Activated T-helper 1 cell treated with anti-CD3 and anti-CD28 coated beads, Interleukin-12 subunit alpha, Interleukin-12 subunit beta, Interleukin-2, Interleukin-4 antibody, amounts not matched to agents 30 ng/mL and 10 ng/mL and 1 ng/mL, durations not matched to agents 14 hours and 24 hours and 36 hours (primary cell): ENCODE measurements at regions of chr2 and their contacts with region 1.

Region 1: DNA sequence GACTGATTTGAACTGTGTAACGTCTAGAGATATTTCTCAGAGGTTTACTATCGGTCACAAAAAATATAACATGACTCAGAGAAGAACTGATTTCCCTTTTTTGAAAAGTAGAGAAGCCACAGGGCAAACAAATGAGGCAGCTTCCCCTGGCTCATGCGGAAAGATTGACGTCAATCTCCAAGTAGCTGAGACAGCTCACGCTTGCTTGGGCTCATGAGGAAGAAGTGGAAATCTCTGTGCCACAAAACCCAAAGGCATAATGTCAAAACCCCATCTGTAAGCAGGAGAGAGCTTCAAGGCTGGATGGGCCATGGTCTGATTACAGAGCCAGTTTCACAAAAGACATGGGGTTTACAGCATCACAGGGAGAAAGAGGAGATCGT is 188.1 kb downstream of the ARL4C start:
- DNase-seq: peak; percentile 79
- H3K4me3 Mint-ChIP-seq: peak overlapping the region; percentile 68
- H3K27ac Mint-ChIP-seq: peak overlapping the region; percentile 99
- H3K4me1 Mint-ChIP-seq: peaks cover 70% of the 10 kb centered on the region
- H3K27me3 Mint-ChIP-seq: no peaks in the 10 kb centered on the region

Region 2: DNA sequence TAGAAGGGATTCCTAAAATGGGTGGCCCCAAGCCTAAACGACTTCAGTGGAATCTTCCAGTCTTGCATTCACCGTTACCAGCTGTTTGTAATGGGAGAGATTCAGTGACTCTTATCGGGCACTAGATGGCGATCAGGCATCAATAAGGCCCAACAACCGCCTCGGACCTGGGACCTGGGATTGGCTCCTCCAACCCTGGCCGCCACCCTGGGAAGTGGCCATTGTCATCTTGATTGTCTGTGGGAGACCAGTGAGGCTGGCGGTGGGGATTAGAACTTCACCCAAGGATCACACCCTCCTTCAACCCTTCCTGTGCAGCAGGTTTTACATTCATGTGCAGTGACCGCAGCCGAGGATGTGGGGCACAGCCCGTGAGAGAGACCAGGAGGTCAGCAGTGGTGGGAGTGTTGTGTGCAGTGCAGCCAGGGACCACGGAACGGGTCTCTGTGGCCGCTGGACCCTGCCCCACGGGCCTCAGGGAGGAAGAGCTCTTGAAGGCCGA is 173.0 kb before region 1 on chr2:
- intact Hi-C with region 1: loop called (anchors 1 kb)
- DNase-seq: peak; percentile 43
- H3K4me3 Mint-ChIP-seq: no peak overlapping the region
- H3K27ac Mint-ChIP-seq: no peak overlapping the region
- H3K4me1 Mint-ChIP-seq: peaks cover 19% of the 10 kb centered on the region
- H3K27me3 Mint-ChIP-seq: peaks cover 10% of the 10 kb centered on the region

Region 3: DNA sequence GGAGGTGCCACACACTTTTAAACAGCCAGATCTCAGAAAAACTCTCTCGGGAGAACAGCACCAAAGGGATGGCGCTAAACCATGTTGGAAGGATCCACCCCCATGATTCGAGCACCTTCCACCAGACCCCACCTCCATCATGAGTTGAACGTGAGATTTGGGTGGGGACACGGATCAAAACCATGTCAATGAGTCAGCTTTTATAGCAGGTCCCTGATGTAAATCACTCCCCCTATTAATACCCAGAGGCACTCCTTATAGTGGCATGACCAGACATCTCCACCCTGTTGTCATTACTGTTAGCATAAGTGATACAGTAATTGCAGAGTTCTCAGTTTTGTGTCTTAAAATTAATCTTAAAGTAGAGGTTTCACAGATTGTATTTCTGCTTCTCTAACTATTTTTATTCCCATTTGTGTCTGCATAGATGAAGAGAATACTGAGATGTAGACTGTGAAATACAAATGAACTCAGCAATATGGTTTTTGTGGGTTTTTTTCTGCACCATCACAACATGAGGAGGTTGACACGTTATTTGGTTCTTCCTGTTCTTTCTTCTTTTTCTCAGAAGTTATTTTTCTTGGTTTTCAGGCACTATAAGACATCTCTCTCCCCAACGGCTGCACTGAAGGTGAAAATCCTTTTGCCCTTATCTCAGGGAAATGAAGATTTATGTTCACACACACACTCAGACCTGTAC is 30.1 kb before region 1 on chr2:
- intact Hi-C with region 1: loop called (anchors 1 kb)
- DNase-seq: peak; percentile 35
- H3K4me3 Mint-ChIP-seq: peak overlapping the region; percentile 44
- H3K27ac Mint-ChIP-seq: peak overlapping the region; percentile 82
- H3K4me1 Mint-ChIP-seq: peaks cover 81% of the 10 kb centered on the region
- H3K27me3 Mint-ChIP-seq: no peaks in the 10 kb centered on the region

Region 4: GRCh38 chr2:234324116-234324515 is 15.3 kb after region 1 on chr2:
- intact Hi-C with region 1: loop called (anchors 2 kb)
- DNase-seq: no peak
- H3K4me3 Mint-ChIP-seq: no peak overlapping the region
- H3K27ac Mint-ChIP-seq: peak overlapping the region; percentile 93
- H3K4me1 Mint-ChIP-seq: peaks cover 52% of the 10 kb centered on the region
- H3K27me3 Mint-ChIP-seq: no peaks in the 10 kb centered on the region

Region 5: DNA sequence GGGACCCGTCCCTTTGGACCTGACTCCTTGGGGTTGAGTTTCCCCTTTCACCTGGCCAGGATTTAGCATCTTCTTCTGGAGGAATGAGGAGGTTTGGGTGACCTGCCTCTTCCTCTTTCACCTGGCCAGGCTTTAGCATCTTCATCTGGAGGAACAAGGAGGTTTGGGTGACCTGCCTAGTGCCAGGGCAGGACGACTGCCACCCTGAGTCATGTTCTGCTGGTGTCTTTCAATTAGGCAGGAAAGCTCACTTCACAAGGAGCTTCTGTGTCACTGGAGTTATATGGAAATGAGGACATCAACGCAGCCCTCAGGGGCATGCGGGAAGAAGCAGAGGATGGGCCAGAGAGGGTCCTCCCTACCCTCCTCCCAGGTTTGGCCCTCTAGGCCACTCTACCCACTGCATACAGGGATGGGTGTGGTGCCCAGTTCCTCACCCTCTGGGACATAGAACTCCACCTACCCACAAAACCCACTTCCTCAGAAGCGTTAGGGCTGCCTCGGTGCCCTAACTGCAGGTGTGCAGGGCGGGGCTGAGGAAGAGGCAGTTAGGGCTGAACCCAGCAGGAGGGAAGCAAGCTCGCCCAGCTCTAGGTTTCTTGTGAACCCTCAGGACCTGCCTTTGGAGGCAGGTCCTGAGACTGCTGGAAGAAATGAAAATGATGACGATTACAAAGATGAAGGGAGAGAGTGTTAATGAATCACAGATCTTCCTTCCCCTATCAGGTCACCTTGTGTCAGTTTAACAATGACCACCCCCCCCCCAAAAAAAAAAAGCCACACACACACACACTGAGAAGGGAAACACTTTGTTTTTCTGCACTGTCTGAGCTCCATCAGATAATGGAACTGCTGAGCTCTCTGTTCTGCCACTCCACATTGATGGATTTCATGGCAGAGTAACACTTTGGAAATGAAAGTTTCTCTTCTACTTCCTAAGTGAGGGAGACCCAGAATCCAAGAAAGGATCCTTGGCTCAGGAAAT is 117.1 kb after region 1 on chr2:
- intact Hi-C with region 1: loop called (anchors 1 kb)
- DNase-seq: peak; percentile 75
- H3K4me3 Mint-ChIP-seq: peak overlapping the region; percentile 75
- H3K27ac Mint-ChIP-seq: peak overlapping the region; percentile 99
- H3K4me1 Mint-ChIP-seq: peaks cover 77% of the 10 kb centered on the region
- H3K27me3 Mint-ChIP-seq: no peaks in the 10 kb centered on the region

Region 6: DNA sequence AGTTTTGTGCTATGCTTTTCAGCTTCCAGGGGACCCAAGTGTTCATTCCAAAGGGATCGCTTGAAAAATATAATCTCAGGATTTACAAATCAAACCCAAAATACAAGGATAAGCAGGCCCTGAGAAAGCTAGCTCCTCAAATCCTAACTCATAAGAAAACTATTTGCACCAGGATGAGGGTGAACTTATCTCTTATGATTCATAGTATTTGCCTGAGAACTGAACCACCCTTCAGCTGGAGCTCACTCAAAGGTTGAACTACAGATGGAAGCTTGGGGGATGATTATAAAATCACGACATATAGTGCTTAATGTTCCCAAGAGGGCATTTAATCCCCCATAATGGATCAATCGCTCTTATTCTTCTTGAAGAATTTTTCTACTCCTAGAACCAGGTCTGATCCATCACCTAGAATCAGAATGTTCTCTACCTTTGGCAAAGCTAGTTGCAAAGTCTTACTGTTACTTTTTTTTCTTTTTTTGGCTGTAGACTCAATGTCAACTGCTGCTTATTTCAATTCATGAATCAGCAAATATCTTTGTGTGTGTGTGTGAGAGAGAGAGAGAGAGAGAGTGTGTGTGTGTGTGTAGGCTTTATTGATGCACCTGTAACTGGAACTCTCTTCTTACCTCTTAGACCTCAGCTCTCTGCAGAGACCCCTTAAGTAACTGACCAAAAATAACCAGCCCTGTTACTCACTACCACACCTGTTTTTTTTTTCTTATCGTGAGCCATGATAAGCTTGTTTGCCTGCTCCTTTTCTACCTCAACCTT is 143.2 kb after region 1 on chr2:
- intact Hi-C with region 1: loop called (anchors 2 kb)
- DNase-seq: no peak
- H3K4me3 Mint-ChIP-seq: peak overlapping the region; percentile 79
- H3K27ac Mint-ChIP-seq: peak overlapping the region; percentile 90
- H3K4me1 Mint-ChIP-seq: peaks cover 88% of the 10 kb centered on the region
- H3K27me3 Mint-ChIP-seq: peaks cover 2% of the 10 kb centered on the region